ENCODE measurements at regions of chr9 and their contacts with region 1.

Region 1: GRCh38 chr9:79471580-79472543 is 99.9 kb upstream of the TLE4 start:
- DNase-seq: peak; percentile 39 to 91 (median 76)

Region 2: GRCh38 chr9:80175286-80176150 is 703.7 kb after region 1 on chr9:
- intact Hi-C with region 1: loop called (anchors 2 kb)
- DNase-seq: no peak

Measured in posterior cingulate gyrus (tissue), 11 donors.